Naive thymus-derived CD4-positive, alpha-beta T cell (primary cell): ENCODE measurements at regions of chr7 and their contacts with region 1.

Region 1: GRCh38 chr7:1175967-1176851 is 16.2 kb upstream of the ZFAND2A start:
- DNase-seq: peak; percentile 38 to 88 (median 64)
- ATAC-seq: peak; percentile 81
- H3K4me3 ChIP-seq: peak overlapping the region; percentile 47
- H3K4me3 Mint-ChIP-seq: peak overlapping the region in 8 of 10 donors; percentile 32 to 78 (median 53)
- H3K27ac ChIP-seq: no peak overlapping the region
- H3K27ac Mint-ChIP-seq: peak overlapping the region in 1 of 9 donors; percentile 42
- H3K4me1 ChIP-seq: peaks cover 6 to 10% of the 10 kb centered on the region in 2 donors
- H3K4me1 Mint-ChIP-seq: peaks cover 7 to 15% (median 11%) of the 10 kb centered on the region in 7 donors
- H3K27me3 ChIP-seq: no peaks in the 10 kb centered on the region
- H3K27me3 Mint-ChIP-seq: peaks cover 11 to 19% (median 18%) of the 10 kb centered on the region in 5 donors

Region 2: DNA sequence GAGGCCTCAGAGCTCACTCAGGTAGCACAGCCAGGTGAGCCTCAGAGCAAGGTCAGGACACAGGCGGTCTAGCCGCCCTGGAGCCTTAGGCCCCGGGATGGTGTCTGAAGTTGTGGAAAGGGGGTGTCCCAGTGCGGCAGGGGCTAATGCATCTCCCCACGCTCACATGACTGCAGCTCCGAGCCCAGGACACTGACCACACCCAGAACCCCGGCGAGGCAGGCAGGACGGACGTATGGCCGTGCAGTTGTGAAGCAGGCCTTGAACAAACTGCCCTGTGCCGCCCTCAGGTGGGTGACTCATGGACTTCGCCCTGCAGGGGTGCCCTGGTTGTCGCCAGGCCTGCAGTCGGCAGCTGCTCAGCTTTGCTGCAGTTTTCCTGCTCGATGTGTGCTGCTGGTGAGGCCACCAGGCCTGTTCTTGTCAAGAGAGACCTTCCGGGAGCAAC is 444.1 kb before region 1 on chr7:
- CTCF ChIA-PET with region 1: no interaction called
- POLR2A ChIA-PET with region 1: no interaction called
- intact Hi-C with region 1: no loop called
- DNase-seq: peak in 2 of 9 donors; percentile 14 to 32
- ATAC-seq: no peak
- H3K4me3 ChIP-seq: no peak overlapping the region
- H3K4me3 Mint-ChIP-seq: no peak overlapping the region
- H3K27ac ChIP-seq: no peak overlapping the region
- H3K27ac Mint-ChIP-seq: no peak overlapping the region
- H3K4me1 ChIP-seq: peaks cover 6 to 7% of the 10 kb centered on the region in 2 donors
- H3K4me1 Mint-ChIP-seq: peaks cover 13 to 29% (median 20%) of the 10 kb centered on the region in 7 donors
- H3K27me3 ChIP-seq: no peaks in the 10 kb centered on the region
- H3K27me3 Mint-ChIP-seq: no peaks in the 10 kb centered on the region

Region 3: DNA sequence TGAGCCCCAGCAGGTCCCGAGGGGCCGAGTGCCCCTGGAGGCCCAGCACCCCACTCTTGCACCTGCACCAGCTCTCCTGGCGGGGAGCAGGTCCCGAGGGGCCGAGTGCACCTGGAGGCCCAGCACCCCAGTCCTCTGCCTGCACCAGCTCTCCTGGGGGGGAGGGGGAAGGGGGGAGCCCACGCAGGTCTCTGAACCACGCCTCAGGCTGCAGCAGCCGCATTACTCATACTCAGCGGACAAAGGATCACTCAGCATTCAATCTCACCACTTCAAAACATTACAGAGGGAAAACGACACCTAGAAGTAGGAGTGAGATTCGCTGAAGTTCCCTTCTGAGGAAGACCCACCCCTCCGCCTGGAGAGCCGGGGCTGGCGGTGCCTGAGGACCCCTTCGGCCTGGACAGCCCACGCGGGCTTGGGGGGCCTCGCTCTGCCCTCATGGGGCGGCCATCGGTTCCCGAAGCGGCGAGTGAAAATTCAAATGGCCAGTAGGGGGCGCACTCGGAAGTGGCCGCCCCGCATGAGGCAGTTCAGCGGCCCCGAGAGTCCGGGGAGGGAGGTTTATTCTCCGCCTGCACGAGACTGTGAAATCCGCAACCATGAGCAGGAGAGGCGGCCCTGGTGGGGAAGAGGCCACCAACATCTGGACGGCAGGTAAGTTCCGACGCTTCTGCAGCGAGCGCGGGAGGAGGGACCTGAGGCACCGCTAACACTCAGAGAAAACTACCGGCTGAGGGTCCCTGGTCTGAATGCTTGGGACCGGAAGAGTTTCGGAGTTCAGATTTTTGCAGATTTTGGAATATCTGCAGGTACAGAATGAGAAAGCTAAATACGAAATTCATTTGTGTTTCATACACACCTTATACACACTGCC is 89.4 kb before region 1 on chr7:
- CTCF ChIA-PET with region 1: interaction called, 20 read pairs
- POLR2A ChIA-PET with region 1: no interaction called
- intact Hi-C with region 1: loop called (anchors 1 to 2 kb)
- DNase-seq: peak; percentile 44 to 83 (median 71)
- ATAC-seq: peak; percentile 87
- H3K4me3 ChIP-seq: peak overlapping the region; percentile 50
- H3K4me3 Mint-ChIP-seq: peak overlapping the region; percentile 59 to 86 (median 80)
- H3K27ac ChIP-seq: no peak overlapping the region
- H3K27ac Mint-ChIP-seq: peak overlapping the region in 1 of 9 donors; percentile 82
- H3K4me1 ChIP-seq: peaks cover 3 to 6% of the 10 kb centered on the region in 2 donors
- H3K4me1 Mint-ChIP-seq: peaks cover 7 to 20% (median 12%) of the 10 kb centered on the region in 7 donors
- H3K27me3 ChIP-seq: no peaks in the 10 kb centered on the region
- H3K27me3 Mint-ChIP-seq: peaks cover 0 to 3% (median 0%) of the 10 kb centered on the region in 5 donors

Region 4: GRCh38 chr7:1127001-1127400 is 49.2 kb before region 1 on chr7:
- CTCF ChIA-PET with region 1: no interaction called
- POLR2A ChIA-PET with region 1: no interaction called
- intact Hi-C with region 1: no loop called
- DNase-seq: no peak
- ATAC-seq: no peak
- H3K4me3 ChIP-seq: no peak overlapping the region
- H3K4me3 Mint-ChIP-seq: peak overlapping the region in 1 of 10 donors; percentile 63
- H3K27ac ChIP-seq: no peak overlapping the region
- H3K27ac Mint-ChIP-seq: no peak overlapping the region
- H3K4me1 ChIP-seq: no peaks in the 10 kb centered on the region
- H3K4me1 Mint-ChIP-seq: no peaks in the 10 kb centered on the region
- H3K27me3 ChIP-seq: no peaks in the 10 kb centered on the region
- H3K27me3 Mint-ChIP-seq: no peaks in the 10 kb centered on the region

Region 5: GRCh38 chr7:1149351-1149794 is 26.8 kb before region 1 on chr7:
- CTCF ChIA-PET with region 1: no interaction called
- POLR2A ChIA-PET with region 1: no interaction called
- intact Hi-C with region 1: no loop called
- DNase-seq: no peak
- ATAC-seq: no peak
- H3K4me3 ChIP-seq: no peak overlapping the region
- H3K4me3 Mint-ChIP-seq: no peak overlapping the region
- H3K27ac ChIP-seq: no peak overlapping the region
- H3K27ac Mint-ChIP-seq: no peak overlapping the region
- H3K4me1 ChIP-seq: no peaks in the 10 kb centered on the region
- H3K4me1 Mint-ChIP-seq: peaks cover 0 to 7% (median 0%) of the 10 kb centered on the region in 7 donors
- H3K27me3 ChIP-seq: no peaks in the 10 kb centered on the region
- H3K27me3 Mint-ChIP-seq: no peaks in the 10 kb centered on the region

Region 6: GRCh38 chr7:1290026-1290678 is 113.9 kb after region 1 on chr7:
- CTCF ChIA-PET with region 1: no interaction called
- POLR2A ChIA-PET with region 1: no interaction called
- intact Hi-C with region 1: no loop called
- DNase-seq: peak in 6 of 9 donors; percentile 16 to 32 (median 22)
- ATAC-seq: peak; percentile 72
- H3K4me3 ChIP-seq: peak overlapping the region; percentile 53
- H3K4me3 Mint-ChIP-seq: peak overlapping the region; percentile 55 to 89 (median 86)
- H3K27ac ChIP-seq: no peak overlapping the region
- H3K27ac Mint-ChIP-seq: peak overlapping the region in 1 of 9 donors; percentile 3
- H3K4me1 ChIP-seq: no peaks in the 10 kb centered on the region
- H3K4me1 Mint-ChIP-seq: peaks cover 0 to 5% (median 0%) of the 10 kb centered on the region in 7 donors
- H3K27me3 ChIP-seq: no peaks in the 10 kb centered on the region
- H3K27me3 Mint-ChIP-seq: peaks cover 0 to 23% (median 6%) of the 10 kb centered on the region in 5 donors

Region 7: GRCh38 chr7:1569833-1570633 is 393.8 kb after region 1 on chr7 and contains the start of gene PSMG3:
- CTCF ChIA-PET with region 1: no interaction called
- POLR2A ChIA-PET with region 1: no interaction called
- intact Hi-C with region 1: loop called in 1 of 2 experiments (anchors 10 kb)
- DNase-seq: peak; percentile 72 to 91 (median 84)
- ATAC-seq: peak; percentile 94
- H3K4me3 ChIP-seq: peak within 1 kb of the TSS; percentile 90
- H3K4me3 Mint-ChIP-seq: peak within 1 kb of the TSS; percentile 77 to 91 (median 86)
- H3K27ac ChIP-seq: peak within 1 kb of the TSS; percentile 95
- H3K27ac Mint-ChIP-seq: peak within 1 kb of the TSS; percentile 81 to 93 (median 88)
- H3K4me1 ChIP-seq: peaks cover 3 to 16% of the 10 kb centered on the region in 2 donors
- H3K4me1 Mint-ChIP-seq: peaks cover 14 to 36% (median 26%) of the 10 kb centered on the region in 7 donors
- H3K27me3 ChIP-seq: no peaks in the 10 kb centered on the region
- H3K27me3 Mint-ChIP-seq: no peaks in the 10 kb centered on the region
- total RNA-seq, gene PSMG3: 12.1 to 31.8 (median 23.2) TPM